ENCODE measurements at regions of chr19 and their contacts with region 1.

Region 1: GRCh38 chr19:40650749-40651305 is 39.6 kb downstream of the NUMBL start:
- DNase-seq: peak; percentile 74
- ATAC-seq: peak; percentile 3; the same call in 1 of the 2 replicates
- H3K4me3 ChIP-seq: no peak overlapping the region
- H3K27ac ChIP-seq: peak overlapping the region; percentile 79; the same call in 1 of the 2 replicates
- H3K4me1 ChIP-seq: peaks cover 10% of the 10 kb centered on the region
- H3K27me3 ChIP-seq: no peaks in the 10 kb centered on the region
- CTCF ChIP-seq: no peak
- POLR2A ChIP-seq: no peak
- RAD21 ChIP-seq: no peak

Region 2: GRCh38 chr19:40425450-40426287 is 225.2 kb before region 1 on chr19 and contains the start of gene SERTAD1:
- CTCF ChIA-PET with region 1: no interaction called
- POLR2A ChIA-PET with region 1: no interaction called
- dilution Hi-C with region 1: no loop called
- in situ Hi-C with region 1: no loop called
- intact Hi-C with region 1: loop called (anchors 5 kb)
- DNase-seq: peak; percentile 99
- ATAC-seq: peak; percentile 90
- H3K4me3 ChIP-seq: peak within 1 kb of the TSS; percentile 71
- H3K27ac ChIP-seq: peak within 1 kb of the TSS; percentile 98
- H3K4me1 ChIP-seq: peaks cover 2% of the 10 kb centered on the region; the same call in 1 of the 2 replicates
- H3K27me3 ChIP-seq: no peaks in the 10 kb centered on the region
- CTCF ChIP-seq: peak; percentile 49
- POLR2A ChIP-seq: peak; percentile 99
- RAD21 ChIP-seq: no peak
- total RNA-seq, gene SERTAD1: 25.6 and 27.4 TPM in 2 replicates

Region 3: GRCh38 chr19:40444192-40445028 is 206.4 kb before region 1 on chr19 and contains the start of gene SERTAD3:
- CTCF ChIA-PET with region 1: no interaction called
- POLR2A ChIA-PET with region 1: no interaction called
- dilution Hi-C with region 1: no loop called
- in situ Hi-C with region 1: no loop called
- intact Hi-C with region 1: loop called (anchors 5 kb)
- DNase-seq: peak; percentile 91
- ATAC-seq: peak; percentile 80
- H3K4me3 ChIP-seq: peak within 1 kb of the TSS; percentile 70
- H3K27ac ChIP-seq: peak within 1 kb of the TSS; percentile 95
- H3K4me1 ChIP-seq: peaks cover 2% of the 10 kb centered on the region
- H3K27me3 ChIP-seq: no peaks in the 10 kb centered on the region
- CTCF ChIP-seq: peak; percentile 38
- POLR2A ChIP-seq: peak; percentile 93
- RAD21 ChIP-seq: peak; percentile 32; the same call in 1 of the 2 replicates
- total RNA-seq, gene SERTAD3: 23.3 and 25.6 TPM in 2 replicates

Region 4: DNA sequence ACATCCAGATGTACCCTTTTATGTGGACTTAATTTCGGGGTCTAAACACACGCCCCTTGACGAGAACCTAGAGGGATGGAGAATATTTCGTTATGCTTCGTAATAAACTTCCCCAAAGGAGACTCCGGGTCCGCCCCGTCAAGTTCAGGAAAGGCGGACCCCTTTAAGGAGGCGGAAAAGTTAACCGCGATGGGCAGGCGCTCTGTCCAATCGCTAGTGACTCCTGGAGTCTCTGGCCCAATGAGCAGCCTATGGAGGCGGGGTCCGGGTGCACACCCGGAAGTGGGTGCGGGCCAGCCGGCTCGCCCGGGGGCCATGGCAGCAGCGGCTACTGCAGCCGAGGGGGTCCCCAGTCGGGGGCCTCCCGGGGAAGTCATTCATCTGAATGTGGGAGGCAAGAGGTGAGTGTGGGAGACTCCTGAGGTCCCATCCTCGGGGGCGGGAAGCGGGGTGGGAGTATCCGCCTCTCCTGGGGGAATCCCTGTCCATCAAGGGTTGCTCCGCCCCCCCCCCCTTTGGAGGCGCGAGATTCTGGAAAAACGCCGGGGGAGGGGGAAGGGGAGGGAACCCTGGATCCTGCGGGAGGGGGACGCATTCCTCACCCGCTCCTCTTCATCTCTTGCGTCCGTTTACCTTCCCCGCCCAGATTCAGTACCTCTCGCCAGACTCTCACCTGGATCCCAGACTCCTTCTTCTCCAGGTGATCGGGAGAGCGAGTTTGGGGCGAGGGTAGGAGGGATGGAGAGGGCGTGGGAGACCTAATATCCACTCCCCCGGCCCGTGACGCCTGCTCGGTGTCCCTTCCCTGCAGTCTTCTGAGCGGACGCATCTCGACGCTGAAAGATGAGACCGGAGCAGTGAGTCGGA is 74.0 kb before region 1 on chr19 and contains the start of gene SHKBP1:
- CTCF ChIA-PET with region 1: no interaction called
- POLR2A ChIA-PET with region 1: no interaction called
- dilution Hi-C with region 1: no loop called
- in situ Hi-C with region 1: no loop called
- intact Hi-C with region 1: no loop called
- DNase-seq: peak; percentile 92
- ATAC-seq: peak; percentile 99
- H3K4me3 ChIP-seq: peak within 1 kb of the TSS; percentile 96
- H3K27ac ChIP-seq: peak within 1 kb of the TSS; percentile 85
- H3K4me1 ChIP-seq: peaks cover 4% of the 10 kb centered on the region
- H3K27me3 ChIP-seq: no peaks in the 10 kb centered on the region
- CTCF ChIP-seq: no peak
- POLR2A ChIP-seq: peak; percentile 50; the same call in 1 of the 2 replicates
- RAD21 ChIP-seq: no peak
- total RNA-seq, gene SHKBP1: 15.6 and 16.1 TPM in 2 replicates

Region 5: DNA sequence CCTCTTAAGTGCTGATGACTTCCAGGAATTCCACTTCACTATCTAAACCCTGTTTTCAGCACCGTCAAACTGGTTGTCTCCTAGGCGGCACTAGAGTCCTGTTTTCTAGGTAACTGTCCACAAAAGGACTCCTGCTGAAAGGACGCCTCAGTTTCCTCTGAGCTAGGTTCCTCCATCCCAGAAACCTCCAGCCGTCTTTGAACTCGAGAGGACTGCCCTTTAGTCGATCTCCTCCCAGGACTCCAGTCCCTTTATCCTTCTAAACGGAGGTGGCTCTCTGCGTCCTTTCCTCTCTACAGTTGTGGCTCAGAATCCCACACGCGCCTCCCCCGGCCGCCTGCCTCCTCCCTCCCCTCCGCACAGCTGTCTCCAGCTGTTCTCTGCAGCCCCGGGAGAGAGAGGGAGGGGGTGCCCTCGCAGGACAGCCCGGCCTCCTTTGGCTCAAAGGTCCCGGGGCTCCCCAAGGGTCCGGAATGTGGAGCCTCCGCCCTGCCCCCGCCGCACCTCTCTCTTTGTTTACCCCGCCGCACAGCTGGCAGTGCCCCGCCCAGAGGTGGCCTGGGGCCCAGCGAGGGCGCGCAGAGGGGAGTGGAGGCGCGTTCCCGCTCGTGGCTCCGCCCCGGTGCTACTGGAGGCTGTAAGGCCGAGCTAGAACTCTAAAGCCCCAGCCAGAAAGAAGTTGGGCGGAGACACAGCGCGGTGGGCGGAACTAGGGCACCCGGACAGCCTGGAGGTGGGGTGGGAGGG is 47.3 kb before region 1 on chr19:
- CTCF ChIA-PET with region 1: interaction called, 6 read pairs
- POLR2A ChIA-PET with region 1: interaction called, 11 read pairs
- dilution Hi-C with region 1: no loop called
- in situ Hi-C with region 1: no loop called
- intact Hi-C with region 1: no loop called
- DNase-seq: peak; percentile 92
- ATAC-seq: peak; percentile 85
- H3K4me3 ChIP-seq: peak overlapping the region; percentile 9
- H3K27ac ChIP-seq: peak overlapping the region; percentile 96
- H3K4me1 ChIP-seq: peaks cover 20% of the 10 kb centered on the region
- H3K27me3 ChIP-seq: no peaks in the 10 kb centered on the region
- CTCF ChIP-seq: peak; percentile 21; the same call in 1 of the 2 replicates
- POLR2A ChIP-seq: no peak
- RAD21 ChIP-seq: no peak

Region 6: GRCh38 chr19:40633207-40633606 is 17.6 kb before region 1 on chr19:
- CTCF ChIA-PET with region 1: interaction called, 32 read pairs
- POLR2A ChIA-PET with region 1: interaction called, 3 read pairs
- dilution Hi-C with region 1: no loop called
- in situ Hi-C with region 1: no loop called
- intact Hi-C with region 1: no loop called
- DNase-seq: peak; percentile 85
- ATAC-seq: peak; percentile 68
- H3K4me3 ChIP-seq: no peak overlapping the region
- H3K27ac ChIP-seq: peak overlapping the region; percentile 89
- H3K4me1 ChIP-seq: peaks cover 14% of the 10 kb centered on the region
- H3K27me3 ChIP-seq: no peaks in the 10 kb centered on the region
- CTCF ChIP-seq: no peak
- POLR2A ChIP-seq: no peak
- RAD21 ChIP-seq: no peak

Region 7: DNA sequence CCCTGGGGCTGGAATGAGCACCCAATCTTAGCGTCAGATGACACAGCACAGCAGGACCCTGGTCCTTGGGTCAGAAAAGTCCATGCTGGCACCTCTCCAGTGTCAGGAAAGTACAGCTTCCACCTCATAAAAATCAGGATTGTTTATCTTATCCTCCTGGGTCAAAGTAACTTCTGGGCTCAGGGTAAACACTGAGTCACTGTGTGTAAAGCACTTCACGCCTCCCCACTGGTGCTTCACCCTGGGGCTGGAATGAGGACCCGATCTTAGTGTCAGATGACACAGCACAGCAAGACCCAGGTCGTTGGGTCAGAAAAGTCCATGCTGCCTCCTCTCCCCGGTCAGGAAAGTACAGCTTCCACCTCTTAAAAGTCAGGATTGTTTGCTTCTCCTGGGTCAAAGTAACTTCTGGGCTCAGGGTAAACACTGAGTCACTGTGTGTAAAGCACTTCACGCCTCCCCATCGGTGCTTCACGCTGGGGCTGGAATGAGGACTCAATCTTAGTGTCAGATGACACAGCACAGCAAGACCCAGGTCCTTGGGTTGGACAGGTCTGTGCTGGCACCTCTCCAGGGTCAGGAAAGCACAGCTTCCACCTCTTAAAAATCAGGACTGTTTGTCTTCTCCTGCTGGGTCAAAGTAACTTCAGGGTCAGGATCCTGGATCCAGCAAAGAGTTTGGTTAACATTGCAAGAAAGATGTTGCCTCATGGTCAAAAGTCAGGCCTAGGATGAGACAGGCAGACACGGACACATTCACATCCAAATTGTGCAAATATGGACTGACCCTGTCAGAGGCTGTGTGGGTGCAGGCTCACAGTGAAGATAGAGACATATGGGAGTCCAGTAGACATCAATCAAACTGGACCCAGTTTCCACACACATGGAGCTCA is 270.4 kb after region 1 on chr19:
- CTCF ChIA-PET with region 1: no interaction called
- POLR2A ChIA-PET with region 1: no interaction called
- dilution Hi-C with region 1: no loop called
- in situ Hi-C with region 1: no loop called
- intact Hi-C with region 1: no loop called
- DNase-seq: no peak
- ATAC-seq: peak; percentile 37
- H3K4me3 ChIP-seq: no peak overlapping the region
- H3K27ac ChIP-seq: no peak overlapping the region
- H3K4me1 ChIP-seq: no peaks in the 10 kb centered on the region
- H3K27me3 ChIP-seq: no peaks in the 10 kb centered on the region
- CTCF ChIP-seq: no peak
- POLR2A ChIP-seq: no peak
- RAD21 ChIP-seq: no peak

Region 8: GRCh38 chr19:41144403-41144802 is 493.6 kb after region 1 on chr19:
- CTCF ChIA-PET with region 1: interaction called, 3 read pairs
- POLR2A ChIA-PET with region 1: no interaction called
- dilution Hi-C with region 1: no loop called
- in situ Hi-C with region 1: loop called (anchors 10 kb)
- intact Hi-C with region 1: no loop called
- DNase-seq: peak; percentile 78
- ATAC-seq: peak; percentile 92
- H3K4me3 ChIP-seq: no peak overlapping the region
- H3K27ac ChIP-seq: no peak overlapping the region
- H3K4me1 ChIP-seq: no peaks in the 10 kb centered on the region
- H3K27me3 ChIP-seq: no peaks in the 10 kb centered on the region; the same call in 1 of the 2 replicates
- CTCF ChIP-seq: peak; percentile 89
- POLR2A ChIP-seq: no peak
- RAD21 ChIP-seq: peak; percentile 91

Measured in IMR-90 (cell line).